Prostate gland (tissue), 2 donors: ENCODE measurements at regions of chr12 and their contacts with region 1.

Region 1: DNA sequence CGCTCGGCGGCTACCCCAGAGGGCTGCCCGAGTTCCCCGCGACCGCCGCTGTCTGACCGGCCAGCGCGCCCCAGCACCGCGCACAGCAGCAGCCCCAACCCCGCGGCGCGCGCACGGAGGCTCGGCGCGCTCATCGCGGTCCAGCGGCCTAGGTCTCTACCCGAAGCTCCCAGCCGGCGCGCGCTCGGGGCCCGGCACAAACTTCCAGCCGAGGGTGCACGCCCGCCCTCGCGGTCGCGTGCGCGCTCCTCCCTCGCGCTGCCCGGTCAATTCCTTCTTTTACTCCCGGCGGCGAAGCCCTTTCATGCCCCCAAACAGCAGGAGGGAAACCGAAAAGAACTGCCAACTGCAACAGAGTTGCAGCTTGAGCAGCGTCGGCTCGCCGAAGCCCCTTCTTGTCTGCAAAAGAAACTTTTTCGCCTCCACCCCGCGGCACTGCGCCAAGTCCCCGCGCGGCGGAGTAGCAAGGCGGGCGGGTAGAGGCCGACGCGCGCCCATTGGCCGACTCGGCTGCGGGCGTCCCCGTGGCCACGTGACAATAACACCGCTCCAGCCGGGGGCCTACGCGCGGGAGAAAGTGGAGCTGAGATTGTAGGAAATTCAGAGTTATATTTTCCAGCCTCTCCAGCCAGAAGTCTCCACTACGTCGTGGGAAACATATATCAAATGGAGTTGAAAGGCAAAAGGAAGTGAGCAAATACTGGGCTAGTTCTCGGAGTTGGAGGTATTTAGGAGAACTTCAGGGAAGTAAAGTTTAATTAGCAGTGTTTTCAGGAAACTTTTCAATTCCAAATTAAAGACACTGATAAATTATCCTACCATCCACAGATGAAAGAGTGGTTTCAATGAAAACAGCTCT is at the start of gene LRIG3:
- DNase-seq: peak; percentile 86
- H3K4me3 ChIP-seq: peak within 1 kb of the TSS; percentile 60 to 62
- H3K27ac ChIP-seq: peak within 1 kb of the TSS; percentile 86 to 89
- H3K4me1 ChIP-seq: peaks cover 3% of the 10 kb centered on the region
- H3K27me3 ChIP-seq: no peaks in the 10 kb centered on the region
- CTCF ChIP-seq: peak in 1 of 4 experiments; percentile 26
- POLR2A ChIP-seq: peak; percentile 42
- total RNA-seq, gene LRIG3: 25.2 to 31.7 TPM

Region 2: DNA sequence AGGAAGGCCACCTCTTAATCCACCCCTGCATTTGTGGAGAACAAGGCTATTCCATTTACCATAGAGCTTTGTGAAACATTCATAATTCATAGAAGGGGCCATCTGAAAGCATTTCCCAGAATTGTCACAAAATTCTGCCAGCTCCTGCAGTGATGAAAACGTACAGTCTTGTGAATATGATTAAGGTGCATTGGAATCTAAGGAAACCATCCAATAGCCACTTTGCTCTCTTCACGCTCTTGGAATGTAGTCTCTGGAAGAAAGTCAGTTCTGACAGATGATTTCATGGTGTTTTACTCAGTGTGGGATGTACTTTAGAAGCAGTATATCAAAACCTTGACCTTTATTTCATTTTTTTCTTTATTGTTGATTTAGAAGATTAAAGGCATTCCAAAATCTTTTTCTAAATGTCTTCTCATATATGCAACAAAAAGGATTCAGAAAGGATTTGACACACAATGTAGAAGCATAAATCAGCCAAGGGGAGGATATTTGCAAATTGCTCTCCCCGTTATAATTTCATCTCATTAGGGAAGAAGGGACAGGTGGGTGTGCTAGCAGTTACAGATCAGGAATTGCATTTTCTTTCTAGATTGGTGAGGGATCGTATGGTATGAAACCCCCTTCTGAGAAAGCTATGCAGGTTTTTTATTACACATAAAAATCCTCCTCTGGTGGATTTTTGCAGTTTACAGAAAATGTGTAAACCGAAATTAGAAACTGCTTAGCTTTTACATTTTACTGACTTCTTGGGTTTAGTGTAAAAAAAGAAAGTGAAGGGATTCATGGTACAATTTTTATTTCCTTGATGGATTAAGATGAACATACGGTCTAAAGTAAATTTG is 390.2 kb before region 1 on chr12:
- intact Hi-C with region 1: loop called (anchors 10 kb)
- DNase-seq: no peak
- H3K4me3 ChIP-seq: no peak overlapping the region
- H3K27ac ChIP-seq: no peak overlapping the region
- H3K4me1 ChIP-seq: no peaks in the 10 kb centered on the region
- H3K27me3 ChIP-seq: no peaks in the 10 kb centered on the region
- CTCF ChIP-seq: no peak
- POLR2A ChIP-seq: no peak

Region 3: GRCh38 chr12:58640314-58640713 is 280.0 kb before region 1 on chr12:
- intact Hi-C with region 1: loop called (anchors 10 kb)
- DNase-seq: no peak
- H3K4me3 ChIP-seq: no peak overlapping the region
- H3K27ac ChIP-seq: no peak overlapping the region
- H3K4me1 ChIP-seq: no peaks in the 10 kb centered on the region
- H3K27me3 ChIP-seq: no peaks in the 10 kb centered on the region
- CTCF ChIP-seq: no peak
- POLR2A ChIP-seq: no peak

Region 4: GRCh38 chr12:58888131-58888783 is 32.1 kb before region 1 on chr12:
- intact Hi-C with region 1: loop called (anchors 5 kb)
- DNase-seq: peak; percentile 88
- H3K4me3 ChIP-seq: no peak overlapping the region
- H3K27ac ChIP-seq: no peak overlapping the region
- H3K4me1 ChIP-seq: no peaks in the 10 kb centered on the region
- H3K27me3 ChIP-seq: no peaks in the 10 kb centered on the region
- CTCF ChIP-seq: no peak
- POLR2A ChIP-seq: no peak

Region 5: DNA sequence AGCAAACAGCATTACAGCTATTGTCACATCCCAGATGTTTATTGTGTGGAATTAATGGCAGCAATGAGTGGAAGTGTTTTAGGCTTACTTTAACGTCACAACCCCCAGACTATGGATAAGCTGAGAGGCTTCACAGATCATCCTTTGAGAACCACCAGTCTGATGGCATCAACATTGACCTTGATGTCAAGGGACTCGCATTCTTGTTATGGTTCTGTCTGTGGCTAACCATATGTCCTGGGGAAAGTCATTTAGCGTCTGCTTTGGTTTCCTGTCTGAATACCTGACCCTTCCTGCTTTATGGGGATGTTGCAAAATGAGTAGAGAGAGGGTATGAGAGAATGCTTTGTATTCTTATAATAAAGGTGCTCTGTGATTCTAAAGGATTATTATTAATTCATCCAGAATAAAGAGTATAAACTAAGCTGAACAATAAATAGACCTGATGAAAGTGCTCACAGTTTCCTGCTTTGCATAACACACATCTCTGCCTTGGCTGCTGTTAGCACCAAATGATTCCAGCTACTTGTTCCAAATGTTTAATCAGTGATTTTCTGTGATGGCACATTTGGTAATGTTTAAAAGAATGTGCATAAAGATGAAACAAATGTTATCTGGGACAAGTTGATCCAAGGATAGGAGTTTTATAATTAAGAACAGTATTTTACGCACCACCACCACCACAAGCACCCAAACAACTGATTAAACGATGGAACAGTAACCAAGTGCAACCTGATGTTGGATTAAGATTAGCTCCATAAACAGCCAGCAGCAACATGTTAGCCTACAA is 116.8 kb after region 1 on chr12:
- intact Hi-C with region 1: loop called (anchors 10 kb)
- DNase-seq: no peak
- H3K4me3 ChIP-seq: no peak overlapping the region
- H3K27ac ChIP-seq: no peak overlapping the region
- H3K4me1 ChIP-seq: no peaks in the 10 kb centered on the region
- H3K27me3 ChIP-seq: no peaks in the 10 kb centered on the region
- CTCF ChIP-seq: no peak
- POLR2A ChIP-seq: no peak

Region 6: GRCh38 chr12:59087077-59087673 is 166.8 kb after region 1 on chr12:
- intact Hi-C with region 1: loop called (anchors 10 kb)
- DNase-seq: no peak
- H3K4me3 ChIP-seq: no peak overlapping the region
- H3K27ac ChIP-seq: no peak overlapping the region
- H3K4me1 ChIP-seq: no peaks in the 10 kb centered on the region
- H3K27me3 ChIP-seq: no peaks in the 10 kb centered on the region
- CTCF ChIP-seq: peak in 3 of 4 experiments; percentile 49 to 62 (median 53)
- POLR2A ChIP-seq: no peak

Region 7: DNA sequence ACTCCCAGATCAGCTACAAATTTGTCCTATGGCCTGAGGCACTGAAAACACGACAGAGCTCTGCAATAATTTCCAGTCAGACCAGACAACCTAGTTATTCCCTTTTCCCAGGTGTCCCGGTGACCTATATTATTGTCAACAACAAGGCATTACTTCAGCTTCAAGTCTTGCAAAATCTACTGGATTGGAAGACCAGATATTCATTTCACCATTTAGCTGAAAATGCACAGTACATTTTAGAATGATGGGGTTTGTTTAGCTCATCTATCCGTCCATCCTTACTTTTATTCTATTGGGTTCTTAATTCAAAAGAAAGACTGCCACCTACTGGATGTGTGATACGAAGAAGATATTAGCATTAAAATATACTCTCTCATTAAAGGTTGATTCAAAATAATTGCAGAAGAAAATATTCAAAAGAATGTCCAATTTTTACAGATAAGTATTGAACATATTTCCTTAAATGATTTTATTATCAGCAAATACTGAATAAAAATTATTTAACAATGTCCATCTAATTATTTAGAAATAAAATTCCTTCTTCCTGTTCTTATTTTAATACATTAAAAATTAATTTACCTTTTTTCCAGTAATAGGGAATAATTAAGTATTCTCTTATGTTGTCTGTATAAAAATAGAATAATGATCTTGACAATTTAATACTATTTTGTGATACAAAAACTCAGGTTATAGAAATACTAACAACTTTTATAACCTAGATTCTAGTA is 244.8 kb after region 1 on chr12:
- intact Hi-C with region 1: no loop called
- DNase-seq: no peak
- H3K4me3 ChIP-seq: no peak overlapping the region
- H3K27ac ChIP-seq: no peak overlapping the region
- H3K4me1 ChIP-seq: no peaks in the 10 kb centered on the region
- H3K27me3 ChIP-seq: no peaks in the 10 kb centered on the region
- CTCF ChIP-seq: peak in 3 of 4 experiments; percentile 35 to 49 (median 47)
- POLR2A ChIP-seq: no peak